GM12878 (cell line): ENCODE measurements at regions of chr6 and their contacts with region 1.

Region 1: GRCh38 chr6:83215131-83216047 is 22.2 kb downstream of the RWDD2A start:
- DNase-seq: peak; percentile 40
- ATAC-seq: peak; percentile 99
- H3K4me3 ChIP-seq: no peak overlapping the region
- H3K27ac ChIP-seq: no peak overlapping the region
- H3K4me1 ChIP-seq: no peaks in the 10 kb centered on the region
- H3K27me3 ChIP-seq: no peaks in the 10 kb centered on the region
- CTCF ChIP-seq: peak; percentile 81 to 91 (median 90)
- EP300 ChIP-seq: no peak
- POLR2A ChIP-seq: no peak
- RAD21 ChIP-seq: peak; percentile 91

Region 2: GRCh38 chr6:82247634-82248232 is 967.7 kb before region 1 on chr6 and contains the start of gene IBTK:
- CTCF ChIA-PET with region 1: no interaction called
- POLR2A ChIA-PET with region 1: no interaction called
- RAD21 ChIA-PET with region 1: interaction called, 3 read pairs
- SMC1A ChIA-PET with region 1: no interaction called
- in situ Hi-C with region 1: no loop called
- intact Hi-C with region 1: loop called (anchors 10 kb)
- DNase-seq: peak; percentile 69
- ATAC-seq: peak; percentile 89
- H3K4me3 ChIP-seq: peak within 1 kb of the TSS; percentile 76
- H3K27ac ChIP-seq: peak within 1 kb of the TSS; percentile 76
- H3K4me1 ChIP-seq: peaks cover 6% of the 10 kb centered on the region; the same call in 1 of the 2 replicates
- H3K27me3 ChIP-seq: no peaks in the 10 kb centered on the region
- CTCF ChIP-seq: no peak
- EP300 ChIP-seq: no peak
- POLR2A ChIP-seq: peak; percentile 77
- RAD21 ChIP-seq: no peak
- polyA plus RNA-seq, gene IBTK: 12.0 to 16.6 TPM

Region 3: DNA sequence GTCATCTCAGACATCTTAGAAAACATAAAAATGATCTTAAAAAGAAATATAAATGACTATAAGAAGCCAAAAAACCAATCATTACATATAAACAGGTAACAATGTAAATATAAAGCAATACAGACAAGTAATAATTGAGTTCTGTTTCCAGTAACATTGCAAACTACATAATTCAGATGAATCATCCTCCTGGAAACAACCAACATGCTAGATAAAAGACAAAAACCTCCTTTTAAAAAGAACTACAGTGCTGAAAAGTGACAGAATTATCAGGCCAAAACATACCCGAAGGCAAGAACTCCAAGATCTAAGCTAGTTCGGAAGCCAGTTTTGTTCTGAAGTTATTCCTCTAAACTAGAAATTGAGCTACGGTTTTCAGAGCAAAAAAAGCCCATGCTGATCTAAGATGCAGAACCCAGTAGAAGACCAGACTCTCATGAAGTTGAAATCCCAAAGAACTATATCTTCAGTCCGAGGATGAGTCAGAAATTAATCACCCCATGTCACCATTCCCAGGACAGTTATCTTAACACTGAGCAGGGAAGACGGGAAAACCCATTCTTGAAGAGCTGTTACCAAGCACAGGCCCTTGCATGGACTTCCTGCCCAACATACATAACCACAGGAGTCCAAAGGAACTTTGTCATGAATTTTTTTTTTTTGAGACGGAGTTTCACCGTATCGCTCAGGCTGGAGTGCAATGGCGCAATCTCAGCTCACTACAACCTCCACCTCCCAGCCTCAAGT is 32.1 kb before region 1 on chr6:
- CTCF ChIA-PET with region 1: interaction called, 43 read pairs
- POLR2A ChIA-PET with region 1: interaction called, 3 read pairs
- RAD21 ChIA-PET with region 1: interaction called, 5 read pairs
- SMC1A ChIA-PET with region 1: interaction called, 3 read pairs
- in situ Hi-C with region 1: no loop called
- intact Hi-C with region 1: no loop called
- DNase-seq: no peak
- ATAC-seq: no peak
- H3K4me3 ChIP-seq: no peak overlapping the region
- H3K27ac ChIP-seq: no peak overlapping the region
- H3K4me1 ChIP-seq: no peaks in the 10 kb centered on the region
- H3K27me3 ChIP-seq: no peaks in the 10 kb centered on the region
- CTCF ChIP-seq: no peak
- EP300 ChIP-seq: no peak
- POLR2A ChIP-seq: no peak
- RAD21 ChIP-seq: no peak

Region 4: DNA sequence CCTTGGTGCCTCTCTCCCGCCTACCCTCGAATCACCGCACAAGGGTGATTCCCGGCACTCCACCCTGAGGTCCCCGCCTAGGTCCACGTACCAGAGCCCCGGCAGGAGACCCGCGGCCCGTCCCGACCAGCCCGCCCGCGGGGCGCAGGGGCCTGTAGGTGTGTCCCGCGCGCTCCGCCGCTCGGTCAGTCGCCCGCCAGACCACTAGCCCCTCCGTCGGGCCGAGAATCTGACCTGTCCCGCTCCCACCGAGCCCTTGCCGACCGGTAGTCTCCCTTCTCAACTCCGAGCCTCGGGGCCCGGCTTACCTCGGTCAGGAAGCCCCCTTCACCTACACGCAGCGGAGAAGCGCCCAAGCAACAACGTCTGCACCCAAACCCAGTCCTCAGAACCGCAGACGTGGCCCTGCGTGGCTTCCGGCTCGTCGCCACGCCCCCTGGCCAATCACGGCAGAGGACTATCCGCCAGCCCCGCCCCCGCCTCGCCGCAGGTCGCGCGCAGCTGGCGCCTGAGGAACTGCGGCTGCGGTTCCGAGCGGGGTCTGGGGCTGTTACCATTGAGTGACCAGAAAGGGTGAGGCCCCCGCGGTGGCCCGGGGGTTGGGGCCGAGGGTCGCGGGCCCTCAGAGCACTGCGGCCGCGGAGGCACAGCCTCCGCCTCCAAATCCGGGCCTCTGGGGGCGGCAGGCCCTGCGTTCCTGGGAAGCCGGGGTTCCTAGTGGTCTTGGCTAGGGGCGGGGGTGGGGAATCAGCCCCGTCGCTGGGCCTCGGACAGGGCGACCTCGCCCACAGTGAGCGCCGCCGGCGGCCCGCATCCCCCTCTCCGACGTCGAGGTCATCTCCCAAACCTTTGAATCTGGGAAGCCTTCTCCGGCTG is 22.3 kb before region 1 on chr6 and contains the starts of genes PGM3 and RWDD2A:
- CTCF ChIA-PET with region 1: interaction called, 43 read pairs
- POLR2A ChIA-PET with region 1: interaction called, 3 read pairs
- RAD21 ChIA-PET with region 1: interaction called, 5 read pairs
- SMC1A ChIA-PET with region 1: interaction called, 12 read pairs
- in situ Hi-C with region 1: no loop called
- intact Hi-C with region 1: no loop called
- DNase-seq: peak; percentile 56
- ATAC-seq: peak; percentile 97
- H3K4me3 ChIP-seq: peak within 1 kb of the TSS; percentile 79
- H3K27ac ChIP-seq: peak within 1 kb of the TSS; percentile 89
- H3K4me1 ChIP-seq: peaks cover 5% of the 10 kb centered on the region
- H3K27me3 ChIP-seq: no peaks in the 10 kb centered on the region
- CTCF ChIP-seq: no peak
- EP300 ChIP-seq: no peak
- POLR2A ChIP-seq: peak; percentile 96
- RAD21 ChIP-seq: no peak
- polyA plus RNA-seq, gene PGM3: 23.1 to 28.6 TPM
- polyA plus RNA-seq, gene RWDD2A: 3.2 to 3.4 TPM

Region 5: DNA sequence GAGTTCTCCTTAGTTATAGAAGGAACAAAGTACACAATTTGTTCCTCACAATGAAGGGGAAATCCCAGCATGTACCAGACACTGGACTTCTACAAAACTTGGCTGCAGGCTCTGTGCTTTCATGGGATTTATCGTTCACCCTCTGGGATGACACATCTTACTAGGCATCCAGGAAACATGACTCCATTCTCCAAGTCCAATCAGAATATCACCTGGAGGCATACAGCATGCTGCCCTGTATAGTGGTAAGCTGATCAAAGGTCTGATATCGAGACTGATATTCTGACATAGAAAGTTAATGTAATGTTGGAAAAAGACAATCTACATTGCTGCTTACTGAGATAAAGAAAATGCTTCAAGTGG is 15.5 kb before region 1 on chr6:
- CTCF ChIA-PET with region 1: interaction called, 22 read pairs
- POLR2A ChIA-PET with region 1: interaction called, 3 read pairs
- RAD21 ChIA-PET with region 1: interaction called, 6 read pairs
- SMC1A ChIA-PET with region 1: interaction called, 12 read pairs
- in situ Hi-C with region 1: no loop called
- intact Hi-C with region 1: no loop called
- DNase-seq: no peak
- ATAC-seq: no peak
- H3K4me3 ChIP-seq: no peak overlapping the region
- H3K27ac ChIP-seq: no peak overlapping the region
- H3K4me1 ChIP-seq: no peaks in the 10 kb centered on the region; the same call in 1 of the 2 replicates
- H3K27me3 ChIP-seq: no peaks in the 10 kb centered on the region
- CTCF ChIP-seq: no peak
- EP300 ChIP-seq: no peak
- POLR2A ChIP-seq: no peak
- RAD21 ChIP-seq: no peak

Region 6: DNA sequence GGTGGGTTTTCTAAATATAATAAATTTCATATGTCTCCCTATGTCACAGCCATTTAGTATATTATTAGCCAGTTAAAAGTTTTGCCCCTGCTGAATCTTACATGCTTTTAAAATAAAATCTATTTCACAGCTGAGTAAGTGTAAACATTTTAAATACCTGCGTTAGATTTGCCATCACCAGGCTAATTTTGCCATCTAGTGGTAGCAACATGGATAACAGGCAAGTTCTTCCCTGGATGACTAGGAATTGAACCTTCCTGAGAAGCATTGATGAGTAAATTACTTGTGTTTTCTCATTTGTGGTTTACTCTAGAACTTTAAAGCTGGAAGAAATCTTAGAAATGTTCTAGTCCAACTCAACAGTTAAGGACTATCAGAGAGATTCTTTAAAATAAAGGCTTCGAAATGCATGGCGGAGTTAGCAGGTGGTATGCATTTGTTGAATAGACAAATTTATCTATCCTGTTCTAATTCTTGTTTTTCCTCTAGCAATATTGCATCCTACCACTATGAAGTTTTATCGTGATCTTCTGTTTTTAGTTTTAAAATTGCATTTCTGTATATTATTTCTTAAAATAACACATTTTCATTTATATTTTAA is 299.6 kb after region 1 on chr6:
- CTCF ChIA-PET with region 1: interaction called, 423 read pairs
- POLR2A ChIA-PET with region 1: no interaction called
- RAD21 ChIA-PET with region 1: interaction called, 14 read pairs
- SMC1A ChIA-PET with region 1: interaction called, 158 read pairs
- in situ Hi-C with region 1: loop called (anchors 5 kb)
- intact Hi-C with region 1: no loop called
- DNase-seq: peak; percentile 30
- ATAC-seq: peak; percentile 74
- H3K4me3 ChIP-seq: no peak overlapping the region
- H3K27ac ChIP-seq: no peak overlapping the region
- H3K4me1 ChIP-seq: no peaks in the 10 kb centered on the region
- H3K27me3 ChIP-seq: no peaks in the 10 kb centered on the region; a peak in 1 of 4 replicates
- CTCF ChIP-seq: peak; percentile 72 to 82 (median 76)
- EP300 ChIP-seq: no peak
- POLR2A ChIP-seq: no peak
- RAD21 ChIP-seq: peak; percentile 96